AG04449 (cell line): ENCODE measurements at regions of chrX and their contacts with region 1.

Region 1: DNA sequence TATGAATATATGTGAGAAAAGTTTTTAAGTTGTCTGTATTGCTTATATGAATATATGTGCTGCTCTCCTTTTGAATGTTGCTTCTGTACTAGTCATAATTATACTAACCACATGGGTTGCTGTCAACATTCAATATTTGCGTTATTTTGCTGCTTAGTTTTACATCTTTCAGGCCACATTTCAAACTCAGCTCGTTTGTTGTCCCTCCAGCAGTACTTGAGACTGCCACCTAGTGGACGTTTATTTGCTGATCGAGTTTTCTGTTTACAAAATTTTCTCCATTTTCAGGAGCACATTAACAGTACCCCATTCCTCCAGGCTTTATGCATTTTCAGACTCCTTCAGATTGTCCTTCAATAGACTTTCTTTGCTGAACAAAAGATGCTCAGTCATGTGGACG is 75.8 kb downstream of the NUDT11 start:
- DNase-seq: no peak
- H3K4me3 ChIP-seq: no peak overlapping the region
- CTCF ChIP-seq: peak; percentile 48

Region 2: DNA sequence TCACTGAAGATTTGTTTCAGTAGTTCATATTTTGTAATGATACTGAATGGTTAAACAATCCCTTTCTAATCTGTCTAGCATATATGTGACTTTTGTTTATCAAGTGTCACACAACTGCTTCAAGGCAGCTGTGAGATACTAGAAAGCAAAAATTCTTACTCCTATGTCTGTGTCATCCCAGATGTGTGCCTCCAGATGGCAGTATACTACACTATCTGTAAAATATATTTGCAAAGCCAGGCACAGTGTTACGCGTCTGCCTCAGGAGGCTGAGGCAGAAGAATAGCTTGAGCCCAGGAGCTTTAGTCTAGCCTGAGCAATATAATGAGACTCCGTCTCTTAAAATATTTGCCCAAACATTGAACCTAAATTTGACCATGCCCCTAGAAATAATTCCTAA is 84.0 kb before region 1 on chrX:
- CTCF ChIA-PET with region 1: interaction called, 10 read pairs
- POLR2A ChIA-PET with region 1: no interaction called
- DNase-seq: no peak
- H3K4me3 ChIP-seq: no peak overlapping the region
- CTCF ChIP-seq: peak; percentile 40

Region 3: DNA sequence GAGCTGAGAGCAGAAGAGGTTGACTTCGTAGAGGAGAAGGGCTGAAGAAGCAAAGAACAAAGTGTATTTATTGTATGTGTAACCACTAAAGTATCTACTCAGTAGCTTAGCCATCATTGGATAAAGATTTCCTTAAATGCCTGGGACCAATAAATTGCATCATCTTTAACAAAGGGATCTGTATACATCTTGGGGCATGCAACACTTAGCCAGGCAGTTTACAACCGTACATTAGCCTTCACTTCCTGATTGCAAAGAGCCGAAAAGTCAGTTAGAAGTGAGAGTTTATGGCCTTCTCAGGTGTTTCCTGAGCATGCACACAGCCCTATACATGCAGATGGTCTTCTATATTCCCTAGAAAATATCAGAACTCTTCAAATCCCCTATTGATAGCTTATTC is 404.8 kb after region 1 on chrX:
- CTCF ChIA-PET with region 1: no interaction called
- POLR2A ChIA-PET with region 1: no interaction called
- DNase-seq: no peak
- H3K4me3 ChIP-seq: no peak overlapping the region
- CTCF ChIP-seq: no peak